ENCODE measurements at regions of chr6 and their contacts with region 1.

Region 1: DNA sequence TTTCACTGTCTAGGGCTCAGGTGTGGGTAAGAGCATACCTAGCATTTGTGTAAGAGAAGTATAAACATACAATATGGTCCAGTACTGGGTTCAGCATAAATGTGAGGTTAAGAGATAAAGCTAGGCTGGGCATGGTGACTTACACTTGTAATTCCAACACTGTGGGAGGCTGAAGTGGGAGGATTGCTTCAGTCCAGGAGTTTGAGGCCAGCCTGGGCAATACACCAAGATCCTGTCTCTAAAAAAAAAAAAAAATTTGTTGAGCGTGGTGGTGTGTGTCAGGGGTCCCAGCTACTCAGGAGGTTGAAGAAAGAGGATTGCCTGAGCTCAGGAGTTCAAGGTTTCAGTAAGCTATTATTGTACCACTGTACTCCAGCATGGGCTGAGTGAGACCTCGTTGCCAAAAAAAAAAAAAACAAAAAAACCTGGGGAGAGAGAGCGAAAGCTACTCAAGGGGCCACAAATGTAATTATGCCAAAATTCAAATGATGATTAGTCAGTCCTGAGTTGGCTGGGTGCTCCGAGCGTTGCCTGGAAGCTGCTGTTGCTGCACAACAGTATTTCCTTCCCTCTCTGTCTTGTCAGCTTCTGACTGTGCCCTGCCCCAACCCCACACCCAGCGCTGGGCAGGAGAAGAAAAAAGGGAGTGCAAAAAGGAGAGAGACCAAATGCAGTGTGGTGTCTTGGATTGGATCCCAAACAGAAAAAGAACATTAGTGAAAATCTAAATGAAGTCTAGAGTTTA is 24.0 kb downstream of the CMTR1 start:
- DNase-seq: no peak
- ATAC-seq: no peak
- H3K4me3 ChIP-seq: no peak overlapping the region
- H3K27ac ChIP-seq: no peak overlapping the region
- H3K4me1 ChIP-seq: no peaks in the 10 kb centered on the region
- H3K27me3 ChIP-seq: no peaks in the 10 kb centered on the region
- CTCF ChIP-seq: no peak

Region 2: GRCh38 chr6:37442416-37443215 is 14.4 kb before region 1 on chr6:
- CTCF ChIA-PET with region 1: no interaction called
- POLR2A ChIA-PET with region 1: interaction called, 10 read pairs
- in situ Hi-C with region 1: no loop called
- intact Hi-C with region 1: no loop called
- DNase-seq: no peak
- ATAC-seq: no peak
- H3K4me3 ChIP-seq: no peak overlapping the region
- H3K27ac ChIP-seq: no peak overlapping the region
- H3K4me1 ChIP-seq: peaks cover 6% of the 10 kb centered on the region
- H3K27me3 ChIP-seq: no peaks in the 10 kb centered on the region
- CTCF ChIP-seq: no peak